Activated T-helper 1 cell treated with anti-CD3 and anti-CD28 coated beads, Interleukin-12 subunit alpha, Interleukin-12 subunit beta, Interleukin-2, Interleukin-4 antibody, amounts not matched to agents 30 ng/mL and 10 ng/mL and 1 ng/mL, durations not matched to agents 14 hours and 24 hours and 36 hours (primary cell): ENCODE measurements at regions of chr7 and their contacts with region 1.

Region 1: DNA sequence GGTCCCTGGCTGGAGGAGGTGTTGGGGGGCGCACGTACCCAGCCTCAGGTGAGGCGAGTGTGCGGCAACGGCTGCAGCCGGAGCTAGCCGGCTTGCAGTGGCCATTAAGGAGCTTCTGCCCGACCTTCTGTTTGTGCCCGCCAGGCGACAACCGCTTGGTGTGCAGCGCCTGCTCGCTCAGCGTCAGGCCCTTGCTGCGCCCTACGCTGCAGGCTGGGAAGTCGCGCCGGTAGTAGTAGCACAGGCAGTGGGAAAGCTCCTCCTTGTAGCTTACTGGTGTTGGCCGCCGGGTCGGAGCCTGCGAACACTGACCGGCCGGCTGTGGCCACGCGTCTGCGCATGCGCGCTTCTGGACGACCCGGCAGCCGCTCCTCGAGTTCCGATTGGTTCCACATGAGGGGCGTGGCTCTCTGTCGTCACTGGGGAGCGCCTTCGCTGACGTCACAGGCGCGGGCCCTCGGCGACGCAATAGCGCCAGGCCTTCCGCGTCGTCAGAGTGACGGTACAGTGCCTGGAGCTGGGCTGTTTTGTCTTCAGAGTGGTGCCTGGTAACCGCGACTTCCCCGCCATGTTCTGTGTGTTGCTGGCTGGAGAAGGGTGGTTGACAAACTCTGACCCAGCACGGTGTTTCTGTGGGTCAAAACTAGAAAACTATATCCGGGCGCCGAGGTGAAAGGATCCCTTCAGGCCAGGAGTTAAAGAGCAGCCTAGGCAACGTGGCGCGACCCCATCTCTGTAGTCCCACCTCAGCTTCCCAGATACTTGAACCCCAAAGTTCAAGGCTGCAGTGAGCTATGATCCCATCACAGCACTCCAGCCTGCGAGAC is 76.3 kb upstream of the TMEM248 start:
- DNase-seq: peak; percentile 99
- H3K4me3 Mint-ChIP-seq: peak overlapping the region; percentile 90
- H3K27ac Mint-ChIP-seq: peak overlapping the region; percentile 98
- H3K4me1 Mint-ChIP-seq: peaks cover 19% of the 10 kb centered on the region
- H3K27me3 Mint-ChIP-seq: peaks cover 8% of the 10 kb centered on the region

Region 2: DNA sequence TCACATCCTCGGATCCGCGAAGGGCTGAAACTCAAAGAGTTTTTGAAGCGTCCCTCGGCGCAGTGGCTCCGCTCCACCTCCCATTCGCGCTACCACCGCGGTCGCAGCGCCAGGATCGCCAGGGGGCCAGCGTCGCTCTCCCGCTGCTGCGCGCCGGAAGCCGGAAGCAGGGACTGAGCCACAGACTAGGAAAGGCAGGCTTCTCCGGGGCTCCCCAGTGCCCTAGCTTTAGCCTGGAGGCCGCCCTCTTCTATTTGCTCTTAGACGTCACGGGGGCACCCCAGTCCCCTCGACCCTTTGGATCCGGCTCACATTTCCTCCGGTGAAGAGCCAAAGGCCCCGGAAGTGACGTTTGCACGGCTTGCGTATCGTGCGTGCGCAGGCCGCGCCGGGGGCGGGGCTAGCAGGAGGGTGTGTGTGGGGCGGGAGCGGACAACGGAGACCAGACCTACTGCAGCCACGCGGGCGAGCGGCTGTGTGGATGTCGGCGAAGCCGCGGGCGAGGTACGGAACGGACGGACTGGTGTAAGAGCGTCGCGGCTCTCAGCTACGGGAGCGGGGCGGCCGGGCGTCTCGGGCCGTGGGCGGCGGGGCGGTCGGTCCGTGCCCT is 190.5 kb before region 1 on chr7:
- intact Hi-C with region 1: loop called (anchors 1 kb)
- DNase-seq: peak; percentile 98
- H3K4me3 Mint-ChIP-seq: peak overlapping the region; percentile 94
- H3K27ac Mint-ChIP-seq: peak overlapping the region; percentile 94
- H3K4me1 Mint-ChIP-seq: peaks cover 15% of the 10 kb centered on the region
- H3K27me3 Mint-ChIP-seq: no peaks in the 10 kb centered on the region

Region 3: GRCh38 chr7:66740302-66740979 is 104.3 kb before region 1 on chr7 and contains the start of gene RABGEF1:
- intact Hi-C with region 1: loop called (anchors 1 kb)
- DNase-seq: peak; percentile 98
- H3K4me3 Mint-ChIP-seq: peak within 1 kb of the TSS; percentile 95
- H3K27ac Mint-ChIP-seq: peak within 1 kb of the TSS; percentile 94
- H3K4me1 Mint-ChIP-seq: peaks cover 15% of the 10 kb centered on the region
- H3K27me3 Mint-ChIP-seq: no peaks in the 10 kb centered on the region
- total RNA-seq, gene RABGEF1: 26.7 and 27.8 TPM in 2 replicates

Region 4: GRCh38 chr7:66815951-66816350 is 28.8 kb before region 1 on chr7:
- intact Hi-C with region 1: no loop called
- DNase-seq: no peak
- H3K4me3 Mint-ChIP-seq: no peak overlapping the region
- H3K27ac Mint-ChIP-seq: no peak overlapping the region
- H3K4me1 Mint-ChIP-seq: no peaks in the 10 kb centered on the region
- H3K27me3 Mint-ChIP-seq: no peaks in the 10 kb centered on the region

Region 5: GRCh38 chr7:66894463-66895080 is 49.8 kb after region 1 on chr7:
- intact Hi-C with region 1: loop called (anchors 2 kb)
- DNase-seq: no peak
- H3K4me3 Mint-ChIP-seq: no peak overlapping the region
- H3K27ac Mint-ChIP-seq: no peak overlapping the region
- H3K4me1 Mint-ChIP-seq: no peaks in the 10 kb centered on the region
- H3K27me3 Mint-ChIP-seq: peaks cover 2% of the 10 kb centered on the region

Region 6: GRCh38 chr7:66950763-66951162 is 106.0 kb after region 1 on chr7:
- intact Hi-C with region 1: no loop called
- DNase-seq: no peak
- H3K4me3 Mint-ChIP-seq: no peak overlapping the region
- H3K27ac Mint-ChIP-seq: no peak overlapping the region
- H3K4me1 Mint-ChIP-seq: no peaks in the 10 kb centered on the region
- H3K27me3 Mint-ChIP-seq: no peaks in the 10 kb centered on the region

Region 7: GRCh38 chr7:67302113-67303039 is 457.6 kb after region 1 on chr7:
- intact Hi-C with region 1: loop called (anchors 10 kb)
- DNase-seq: peak; percentile 97
- H3K4me3 Mint-ChIP-seq: peak overlapping the region; percentile 88
- H3K27ac Mint-ChIP-seq: peak overlapping the region; percentile 91
- H3K4me1 Mint-ChIP-seq: peaks cover 21% of the 10 kb centered on the region
- H3K27me3 Mint-ChIP-seq: peaks cover 4% of the 10 kb centered on the region